Mammary epithelial cell (primary cell): ENCODE measurements at regions of chr1 and their contacts with region 1.

Region 1: DNA sequence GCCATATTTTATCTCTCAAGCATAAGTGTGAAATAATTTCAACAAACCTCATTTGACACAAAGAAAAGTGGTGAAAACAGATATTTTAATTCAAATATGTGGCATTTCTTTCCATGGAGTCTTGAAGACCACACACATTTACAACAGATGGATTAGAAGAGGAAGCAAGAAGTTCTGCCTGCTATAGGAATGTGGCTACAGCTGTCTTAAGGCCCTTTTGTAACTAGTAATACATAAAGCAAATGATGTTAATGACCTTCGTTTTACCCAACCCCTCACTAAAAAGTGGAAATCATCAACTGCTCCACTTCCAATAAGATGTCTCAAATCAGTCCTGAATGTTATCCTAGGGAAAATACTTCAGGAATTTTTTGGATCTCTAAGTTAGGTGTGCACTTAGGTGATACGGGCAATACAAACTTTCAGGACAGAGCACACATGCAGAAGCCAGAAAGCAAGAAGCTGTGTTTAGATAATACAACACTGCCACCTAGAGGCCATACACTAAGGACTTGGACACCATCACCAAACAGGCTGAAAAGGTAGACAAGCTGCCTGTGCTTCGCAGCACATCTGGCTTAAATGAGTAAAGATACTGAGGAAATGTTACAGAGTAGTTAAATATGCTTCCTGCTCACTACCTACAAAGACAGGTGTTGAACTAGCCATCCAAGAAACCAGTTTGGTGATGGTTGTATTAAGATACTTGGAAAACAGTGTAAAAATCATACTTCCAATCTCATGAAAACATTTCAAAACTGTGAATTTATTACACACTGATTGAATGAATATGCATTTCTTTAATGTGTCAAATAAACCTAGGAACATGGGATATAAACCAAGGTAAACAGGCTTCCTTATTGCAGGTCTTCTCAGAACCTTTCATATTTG is 24.4 kb downstream of the RRAGC start:
- DNase-seq: peak; percentile 75
- H3K4me3 ChIP-seq: no peak overlapping the region
- H3K27ac ChIP-seq: no peak overlapping the region
- H3K4me1 ChIP-seq: peaks cover 4% of the 10 kb centered on the region
- H3K27me3 ChIP-seq: no peaks in the 10 kb centered on the region
- CTCF ChIP-seq: peak; percentile 74 to 75

Region 2: GRCh38 chr1:38039331-38040088 is 795.7 kb before region 1 on chr1:
- CTCF ChIA-PET with region 1: no interaction called
- dilution Hi-C with region 1: no loop called
- in situ Hi-C with region 1: no loop called
- intact Hi-C with region 1: loop called (anchors 1 kb)
- DNase-seq: no peak
- H3K4me3 ChIP-seq: no peak overlapping the region
- H3K27ac ChIP-seq: no peak overlapping the region
- H3K4me1 ChIP-seq: peaks cover 3% of the 10 kb centered on the region
- H3K27me3 ChIP-seq: no peaks in the 10 kb centered on the region
- CTCF ChIP-seq: no peak

Region 3: GRCh38 chr1:38213646-38214367 is 621.4 kb before region 1 on chr1:
- CTCF ChIA-PET with region 1: no interaction called
- dilution Hi-C with region 1: no loop called
- in situ Hi-C with region 1: no loop called
- intact Hi-C with region 1: no loop called
- DNase-seq: no peak
- H3K4me3 ChIP-seq: no peak overlapping the region
- H3K27ac ChIP-seq: no peak overlapping the region
- H3K4me1 ChIP-seq: no peaks in the 10 kb centered on the region
- H3K27me3 ChIP-seq: no peaks in the 10 kb centered on the region
- CTCF ChIP-seq: no peak

Region 4: GRCh38 chr1:38586993-38587646 is 248.1 kb before region 1 on chr1:
- CTCF ChIA-PET with region 1: no interaction called
- dilution Hi-C with region 1: no loop called
- in situ Hi-C with region 1: no loop called
- intact Hi-C with region 1: no loop called
- DNase-seq: peak; percentile 15
- H3K4me3 ChIP-seq: no peak overlapping the region
- H3K27ac ChIP-seq: no peak overlapping the region
- H3K4me1 ChIP-seq: no peaks in the 10 kb centered on the region
- H3K27me3 ChIP-seq: no peaks in the 10 kb centered on the region
- CTCF ChIP-seq: peak; percentile 92 to 94

Region 5: DNA sequence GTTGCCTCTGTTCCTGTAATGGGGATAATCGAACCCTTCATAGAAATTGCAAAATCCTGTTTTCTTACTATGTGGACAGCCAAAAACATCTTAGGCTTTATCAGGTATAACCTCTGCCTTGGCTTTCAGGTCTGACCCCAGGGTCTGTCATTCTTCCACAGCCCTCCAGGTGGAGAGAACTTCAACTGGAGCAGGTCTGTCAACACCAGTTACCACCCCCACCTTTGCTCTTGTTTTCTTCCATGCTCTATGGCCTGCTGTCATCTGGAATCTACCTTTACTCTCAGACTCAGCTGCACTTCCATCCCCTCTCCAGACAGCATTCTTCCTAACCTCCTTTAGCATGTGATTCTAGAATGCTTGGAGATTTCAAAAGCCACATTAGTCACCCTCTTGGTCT is 56.6 kb after region 1 on chr1:
- CTCF ChIA-PET with region 1: no interaction called
- dilution Hi-C with region 1: no loop called
- in situ Hi-C with region 1: no loop called
- intact Hi-C with region 1: no loop called
- DNase-seq: peak; percentile 11
- H3K4me3 ChIP-seq: no peak overlapping the region
- H3K27ac ChIP-seq: no peak overlapping the region
- H3K4me1 ChIP-seq: no peaks in the 10 kb centered on the region
- H3K27me3 ChIP-seq: no peaks in the 10 kb centered on the region
- CTCF ChIP-seq: peak in 1 of 2 donors; percentile 15

Region 6: DNA sequence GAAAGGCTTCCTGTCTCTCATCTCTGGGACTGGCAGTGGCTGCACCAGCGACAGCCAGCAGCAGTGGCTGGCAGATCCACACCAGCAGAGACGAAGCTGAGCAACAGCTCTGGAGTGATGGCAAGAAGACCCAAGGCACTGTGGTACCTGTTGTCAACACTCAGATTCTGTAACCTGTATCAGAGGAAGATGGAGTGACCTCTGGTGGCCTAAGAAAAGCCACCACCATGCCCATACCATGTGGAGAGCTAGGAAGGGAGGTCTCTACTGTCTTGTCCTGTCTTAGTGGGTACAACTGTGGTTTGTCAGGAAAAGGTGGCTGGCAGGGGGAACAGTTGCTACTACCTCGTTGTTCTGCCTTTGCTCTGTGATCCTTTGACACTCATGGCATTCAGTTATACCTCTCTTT is 129.0 kb after region 1 on chr1:
- CTCF ChIA-PET with region 1: no interaction called
- dilution Hi-C with region 1: no loop called
- in situ Hi-C with region 1: no loop called
- intact Hi-C with region 1: loop called (anchors 1 kb)
- DNase-seq: no peak
- H3K4me3 ChIP-seq: no peak overlapping the region
- H3K27ac ChIP-seq: no peak overlapping the region
- H3K4me1 ChIP-seq: peaks cover 34% of the 10 kb centered on the region
- H3K27me3 ChIP-seq: no peaks in the 10 kb centered on the region
- CTCF ChIP-seq: peak; percentile 19 to 51